Esophagus muscularis mucosa (tissue), 4 donors: ENCODE measurements at regions of chrX and their contacts with region 1.

Region 1: GRCh38 chrX:64205735-64206491 is 405 bp upstream of the AMER1 start:
- DNase-seq: peak; percentile 97
- H3K4me3 ChIP-seq: peak overlapping the region; percentile 68 to 85 (median 73)
- H3K27ac ChIP-seq: peak overlapping the region; percentile 91 to 92 (median 92)
- H3K4me1 ChIP-seq: peaks cover 14 to 43% (median 38%) of the 10 kb centered on the region in 4 donors
- H3K27me3 ChIP-seq: no peaks in the 10 kb centered on the region
- CTCF ChIP-seq: peak in 1 of 3 experiments; percentile 21
- EP300 ChIP-seq: no peak
- POLR2A ChIP-seq: peak; percentile 54

Region 2: GRCh38 chrX:63754860-63755582 is 450.9 kb before region 1 on chrX:
- intact Hi-C with region 1: loop called (anchors 10 kb)
- DNase-seq: peak; percentile 96
- H3K4me3 ChIP-seq: peak overlapping the region; percentile 55 to 71 (median 64)
- H3K27ac ChIP-seq: peak overlapping the region; percentile 85 to 90 (median 88)
- H3K4me1 ChIP-seq: peaks cover 8 to 40% (median 24%) of the 10 kb centered on the region in 4 donors
- H3K27me3 ChIP-seq: no peaks in the 10 kb centered on the region
- CTCF ChIP-seq: no peak
- EP300 ChIP-seq: no peak
- POLR2A ChIP-seq: no peak

Region 3: DNA sequence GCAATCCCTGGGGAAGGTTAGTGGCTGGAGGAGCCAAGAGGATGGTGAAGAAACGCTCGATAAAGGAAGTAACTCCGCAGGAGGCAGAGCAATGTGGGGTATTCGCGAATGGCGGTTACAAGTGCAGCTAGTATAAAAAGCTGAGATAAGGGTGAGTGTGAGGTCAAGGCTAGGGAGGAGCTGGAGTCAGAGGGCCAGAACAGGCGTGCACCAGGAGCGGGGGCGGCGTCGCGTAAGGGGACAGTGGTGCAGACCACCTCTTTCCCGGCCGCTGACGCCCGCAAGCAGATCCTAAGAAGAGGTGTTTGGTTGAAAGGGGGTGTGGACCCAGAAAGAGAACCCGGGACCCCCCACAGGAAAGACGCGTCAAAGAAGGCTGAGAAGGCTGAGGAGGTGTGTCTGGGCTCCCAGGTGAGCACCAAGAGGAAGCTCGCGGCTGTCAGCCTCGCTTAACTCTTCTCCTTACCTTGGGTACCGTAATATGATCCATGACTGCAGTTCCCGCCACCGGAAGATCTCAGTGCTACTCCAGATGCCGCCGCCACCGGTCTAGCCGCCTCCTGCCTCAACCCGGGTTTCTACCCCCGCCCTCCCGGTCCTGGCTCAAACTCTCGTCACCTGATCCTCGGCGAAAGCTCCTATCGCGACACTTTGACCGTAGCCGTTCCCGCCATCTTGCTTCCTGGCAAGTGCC is 189.1 kb after region 1 on chrX and contains the start of gene MTMR8:
- intact Hi-C with region 1: loop called (anchors 5 kb)
- DNase-seq: peak; percentile 90
- H3K4me3 ChIP-seq: peak within 1 kb of the TSS; percentile 66 to 78 (median 68)
- H3K27ac ChIP-seq: peak within 1 kb of the TSS; percentile 20 to 67 (median 44)
- H3K4me1 ChIP-seq: peaks cover 0 to 9% (median 6%) of the 10 kb centered on the region in 4 donors
- H3K27me3 ChIP-seq: no peaks in the 10 kb centered on the region
- CTCF ChIP-seq: no peak
- EP300 ChIP-seq: no peak
- POLR2A ChIP-seq: no peak
- total RNA-seq, gene MTMR8: 1.2 to 2.9 (median 2.2) TPM

Region 4: DNA sequence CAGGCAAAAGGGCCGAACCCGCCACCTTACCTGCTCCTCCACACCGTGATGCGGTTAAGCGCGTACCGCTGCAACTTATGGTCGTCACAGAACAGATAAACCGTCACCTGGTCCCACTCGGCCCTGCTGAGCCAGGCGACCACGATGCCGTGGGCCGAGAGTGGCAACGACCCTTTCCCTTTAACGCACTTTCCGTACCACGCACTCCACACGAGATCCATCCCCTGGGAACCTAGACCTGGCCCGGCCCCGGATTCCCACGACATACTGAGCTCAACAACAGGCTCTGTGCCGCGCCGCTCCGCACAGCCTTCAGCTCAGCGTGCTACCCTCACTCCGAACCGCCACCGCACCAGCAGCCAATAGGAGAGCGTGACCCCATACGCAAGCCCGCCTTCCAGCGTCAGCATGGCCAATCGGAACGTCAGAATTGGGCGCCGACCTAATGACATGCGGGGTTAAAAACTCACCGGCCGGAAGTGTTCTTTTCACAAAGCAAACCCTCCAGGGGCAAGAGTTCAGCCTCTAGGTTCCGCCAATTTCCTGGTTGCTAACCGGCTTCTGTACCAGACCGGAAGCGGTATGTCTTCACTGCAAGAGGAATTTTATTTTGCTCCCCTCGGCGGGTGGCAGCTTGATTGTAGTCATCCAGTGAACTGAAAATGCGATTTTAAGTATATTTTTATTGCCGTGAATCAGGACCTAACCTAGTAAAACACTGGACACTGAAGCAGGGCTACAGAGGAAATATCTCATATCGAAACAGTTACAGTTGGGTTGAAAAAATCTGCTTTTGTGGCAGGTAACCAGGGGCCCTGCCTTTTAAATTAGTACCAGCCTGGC is 1328.8 kb after region 1 on chrX and contains the start of gene LAS1L:
- intact Hi-C with region 1: loop called (anchors 10 kb)
- DNase-seq: peak; percentile 97
- H3K4me3 ChIP-seq: peak within 1 kb of the TSS; percentile 64 to 81 (median 72)
- H3K27ac ChIP-seq: peak within 1 kb of the TSS; percentile 47 to 82 (median 70)
- H3K4me1 ChIP-seq: peaks cover 8 to 20% (median 17%) of the 10 kb centered on the region in 4 donors
- H3K27me3 ChIP-seq: no peaks in the 10 kb centered on the region
- CTCF ChIP-seq: peak in 1 of 3 experiments; percentile 9
- EP300 ChIP-seq: no peak
- POLR2A ChIP-seq: no peak
- total RNA-seq, gene LAS1L: 21.5 to 26.5 (median 22.8) TPM